Testis (tissue), 5 donors: ENCODE measurements at regions of chr5 and their contacts with region 1.

Region 1: DNA sequence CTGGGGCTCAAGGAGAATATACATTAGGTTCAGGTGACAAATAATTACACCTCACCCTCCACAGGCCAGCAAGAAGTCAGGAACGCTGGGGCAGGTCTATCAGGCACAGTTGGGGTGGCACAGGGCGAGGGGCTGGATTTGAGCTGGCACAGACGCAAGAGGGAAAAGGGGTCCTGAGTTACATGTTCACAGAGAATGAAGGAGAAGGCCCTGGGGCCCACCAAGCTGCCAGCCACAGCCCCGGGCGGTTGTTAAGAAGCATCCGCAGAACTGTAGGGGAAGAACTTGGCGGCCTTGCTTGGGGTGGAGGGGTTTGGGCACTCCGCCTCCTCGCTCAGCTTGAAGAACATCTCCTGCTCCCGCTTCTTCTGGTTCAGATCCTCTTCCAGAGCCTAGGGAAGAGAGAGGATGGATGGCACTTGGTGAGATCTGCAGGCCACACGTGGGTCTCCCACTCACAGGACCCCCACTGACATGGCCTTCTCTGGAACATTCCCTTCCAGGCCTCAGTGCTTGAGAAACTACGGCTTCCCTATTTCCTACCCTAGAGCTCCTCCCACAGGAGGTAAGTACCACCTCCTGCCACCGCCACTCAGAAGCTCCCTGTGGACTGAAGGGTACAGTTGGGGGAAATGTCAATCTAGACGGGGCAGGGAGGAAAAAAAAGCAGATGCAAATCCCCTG is 38.3 kb upstream of the FBXW11 start:
- DNase-seq: no peak
- H3K4me3 ChIP-seq: no peak overlapping the region
- H3K27ac ChIP-seq: no peak overlapping the region
- H3K4me1 ChIP-seq: peaks cover 10% of the 10 kb centered on the region
- H3K27me3 ChIP-seq: no peaks in the 10 kb centered on the region
- CTCF ChIP-seq: no peak
- POLR2A ChIP-seq: no peak

Region 2: DNA sequence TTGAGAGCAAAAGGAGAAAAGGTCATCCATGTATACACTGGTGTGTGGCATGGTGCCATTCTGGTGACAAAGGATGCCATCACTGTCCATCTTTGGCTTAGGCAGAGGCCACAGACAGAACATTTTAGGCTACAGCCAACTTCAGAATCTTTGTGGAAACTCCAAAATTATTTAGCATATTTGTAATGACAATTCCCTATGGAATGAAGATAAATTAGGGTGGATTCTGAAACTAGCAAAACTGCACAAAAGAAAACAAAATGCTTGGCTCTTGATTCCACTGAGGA is 130.8 kb before region 1 on chr5:
- intact Hi-C with region 1: loop called (anchors 10 kb)
- DNase-seq: no peak
- H3K4me3 ChIP-seq: no peak overlapping the region
- H3K27ac ChIP-seq: no peak overlapping the region
- H3K4me1 ChIP-seq: no peaks in the 10 kb centered on the region
- H3K27me3 ChIP-seq: no peaks in the 10 kb centered on the region
- CTCF ChIP-seq: no peak
- POLR2A ChIP-seq: no peak